MCF 10A (cell line): ENCODE measurements at regions of chr3 and their contacts with region 1.

Region 1: GRCh38 chr3:190306513-190307165 is 15.6 kb downstream of the CLDN1 start:
- DNase-seq: peak; percentile 94
- H3K4me3 Mint-ChIP-seq: peak overlapping the region; percentile 0
- H3K27ac Mint-ChIP-seq: peak overlapping the region; percentile 29
- H3K4me1 Mint-ChIP-seq: peaks cover 29% of the 10 kb centered on the region
- H3K27me3 Mint-ChIP-seq: no peaks in the 10 kb centered on the region
- CTCF ChIP-seq: no peak

Region 2: DNA sequence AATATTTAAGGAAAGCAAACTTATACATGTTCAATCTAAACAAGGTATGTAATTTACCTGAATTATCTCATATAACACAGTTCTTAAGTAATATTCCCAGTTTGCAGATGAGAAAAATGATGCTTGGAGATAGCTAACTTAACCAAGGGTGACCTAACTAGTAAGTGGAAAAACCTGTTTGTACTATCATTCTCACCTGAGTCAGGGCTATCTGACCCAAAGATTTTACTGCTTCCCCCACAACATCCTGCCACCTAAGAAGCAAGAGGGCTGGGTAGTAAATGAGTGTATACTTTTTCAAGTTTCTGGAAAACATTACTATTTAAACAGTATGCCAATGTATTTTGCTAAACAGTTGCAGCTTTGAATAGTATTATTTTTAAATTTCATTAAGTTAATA is 664.9 kb before region 1 on chr3:
- CTCF ChIA-PET with region 1: no interaction called
- POLR2A ChIA-PET with region 1: no interaction called
- intact Hi-C with region 1: no loop called
- DNase-seq: no peak
- H3K4me3 Mint-ChIP-seq: no peak overlapping the region
- H3K27ac Mint-ChIP-seq: no peak overlapping the region
- H3K4me1 Mint-ChIP-seq: no peaks in the 10 kb centered on the region
- H3K27me3 Mint-ChIP-seq: no peaks in the 10 kb centered on the region
- CTCF ChIP-seq: no peak

Region 3: DNA sequence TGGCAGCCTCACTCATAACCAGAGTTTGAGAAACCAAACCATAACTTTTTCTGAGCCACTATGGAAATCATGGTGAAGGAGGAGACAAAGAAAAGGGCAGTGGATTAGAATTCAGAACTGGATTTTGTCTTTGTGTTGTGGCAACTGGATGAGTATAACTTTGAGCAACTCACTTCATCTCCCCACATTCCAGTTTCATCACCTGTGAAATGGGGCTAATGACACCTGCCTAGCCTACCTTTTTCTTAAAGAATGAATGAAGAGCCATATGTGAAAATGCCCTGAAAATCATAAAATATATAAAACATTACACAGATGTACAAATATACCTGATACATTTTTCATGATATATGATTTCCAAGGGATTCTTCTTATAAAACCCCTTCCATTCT is 76.2 kb before region 1 on chr3:
- CTCF ChIA-PET with region 1: interaction called, 10 read pairs
- POLR2A ChIA-PET with region 1: interaction called, 24 read pairs
- intact Hi-C with region 1: loop called (anchors 1 kb)
- DNase-seq: no peak
- H3K4me3 Mint-ChIP-seq: peak overlapping the region; percentile 57
- H3K27ac Mint-ChIP-seq: peak overlapping the region; percentile 81
- H3K4me1 Mint-ChIP-seq: peaks cover 38% of the 10 kb centered on the region
- H3K27me3 Mint-ChIP-seq: no peaks in the 10 kb centered on the region
- CTCF ChIP-seq: no peak

Region 4: GRCh38 chr3:190294030-190294429 is 12.6 kb before region 1 on chr3:
- CTCF ChIA-PET with region 1: interaction called, 3 read pairs
- POLR2A ChIA-PET with region 1: interaction called, 10 read pairs
- intact Hi-C with region 1: no loop called
- DNase-seq: no peak
- H3K4me3 Mint-ChIP-seq: no peak overlapping the region
- H3K27ac Mint-ChIP-seq: no peak overlapping the region
- H3K4me1 Mint-ChIP-seq: peaks cover under 1% of the 10 kb centered on the region
- H3K27me3 Mint-ChIP-seq: no peaks in the 10 kb centered on the region
- CTCF ChIP-seq: no peak

Region 5: GRCh38 chr3:190614226-190615059 is 307.8 kb after region 1 on chr3:
- CTCF ChIA-PET with region 1: no interaction called
- POLR2A ChIA-PET with region 1: no interaction called
- intact Hi-C with region 1: no loop called
- DNase-seq: no peak
- H3K4me3 Mint-ChIP-seq: no peak overlapping the region
- H3K27ac Mint-ChIP-seq: no peak overlapping the region
- H3K4me1 Mint-ChIP-seq: no peaks in the 10 kb centered on the region
- H3K27me3 Mint-ChIP-seq: no peaks in the 10 kb centered on the region
- CTCF ChIP-seq: no peak